ENCODE measurements at regions of chr4 and their contacts with region 1.

Region 1: DNA sequence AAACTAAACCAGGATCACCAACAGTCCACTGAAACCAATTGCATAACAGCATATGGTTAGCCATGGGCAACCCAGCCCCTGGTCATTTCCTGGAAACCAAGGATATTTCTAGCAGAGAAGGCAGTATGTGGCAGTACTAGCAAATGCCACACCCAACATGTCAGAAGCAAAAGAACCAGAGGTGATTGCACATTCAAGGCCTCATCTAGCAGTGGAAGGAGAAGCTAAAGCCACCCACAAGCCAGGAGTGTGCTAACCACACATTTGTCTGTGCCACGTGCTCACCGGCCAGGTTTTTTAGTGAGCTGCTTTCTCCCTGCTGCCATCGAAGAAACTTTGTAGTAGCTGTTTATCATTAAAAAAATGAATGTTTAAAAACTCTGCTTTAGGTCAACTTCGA is 42.0 kb downstream of the TEC start:
- DNase-seq: no peak
- ATAC-seq: no peak
- H3K4me3 Mint-ChIP-seq: no peak overlapping the region
- H3K27ac Mint-ChIP-seq: no peak overlapping the region
- H3K4me1 Mint-ChIP-seq: peaks cover 9% of the 10 kb centered on the region
- H3K27me3 Mint-ChIP-seq: no peaks in the 10 kb centered on the region
- CTCF ChIP-seq: no peak

Region 2: GRCh38 chr4:48195374-48195773 is 32.3 kb before region 1 on chr4:
- CTCF ChIA-PET with region 1: no interaction called
- POLR2A ChIA-PET with region 1: no interaction called
- intact Hi-C with region 1: loop called (anchors 5 kb)
- DNase-seq: no peak
- ATAC-seq: peak; percentile 18
- H3K4me3 Mint-ChIP-seq: peak overlapping the region; percentile 64
- H3K27ac Mint-ChIP-seq: peak overlapping the region; percentile 73
- H3K4me1 Mint-ChIP-seq: peaks cover 70% of the 10 kb centered on the region
- H3K27me3 Mint-ChIP-seq: no peaks in the 10 kb centered on the region
- CTCF ChIP-seq: no peak

Region 3: GRCh38 chr4:48445704-48446103 is 218.0 kb after region 1 on chr4:
- CTCF ChIA-PET with region 1: no interaction called
- POLR2A ChIA-PET with region 1: no interaction called
- intact Hi-C with region 1: no loop called
- DNase-seq: no peak
- ATAC-seq: no peak
- H3K4me3 Mint-ChIP-seq: no peak overlapping the region
- H3K27ac Mint-ChIP-seq: no peak overlapping the region
- H3K4me1 Mint-ChIP-seq: no peaks in the 10 kb centered on the region
- H3K27me3 Mint-ChIP-seq: peaks cover 2% of the 10 kb centered on the region
- CTCF ChIP-seq: no peak

Region 4: GRCh38 chr4:48718818-48719465 is 491.3 kb after region 1 on chr4:
- CTCF ChIA-PET with region 1: no interaction called
- POLR2A ChIA-PET with region 1: no interaction called
- intact Hi-C with region 1: no loop called
- DNase-seq: no peak
- ATAC-seq: no peak
- H3K4me3 Mint-ChIP-seq: no peak overlapping the region
- H3K27ac Mint-ChIP-seq: no peak overlapping the region
- H3K4me1 Mint-ChIP-seq: peaks cover 17% of the 10 kb centered on the region
- H3K27me3 Mint-ChIP-seq: no peaks in the 10 kb centered on the region
- CTCF ChIP-seq: no peak

Measured in activated B cell treated with CpG ODN at 0.5 μM for 24 hours (primary cell).